H1 (cell line): ENCODE measurements at regions of chr11 and their contacts with region 1.

Region 1: DNA sequence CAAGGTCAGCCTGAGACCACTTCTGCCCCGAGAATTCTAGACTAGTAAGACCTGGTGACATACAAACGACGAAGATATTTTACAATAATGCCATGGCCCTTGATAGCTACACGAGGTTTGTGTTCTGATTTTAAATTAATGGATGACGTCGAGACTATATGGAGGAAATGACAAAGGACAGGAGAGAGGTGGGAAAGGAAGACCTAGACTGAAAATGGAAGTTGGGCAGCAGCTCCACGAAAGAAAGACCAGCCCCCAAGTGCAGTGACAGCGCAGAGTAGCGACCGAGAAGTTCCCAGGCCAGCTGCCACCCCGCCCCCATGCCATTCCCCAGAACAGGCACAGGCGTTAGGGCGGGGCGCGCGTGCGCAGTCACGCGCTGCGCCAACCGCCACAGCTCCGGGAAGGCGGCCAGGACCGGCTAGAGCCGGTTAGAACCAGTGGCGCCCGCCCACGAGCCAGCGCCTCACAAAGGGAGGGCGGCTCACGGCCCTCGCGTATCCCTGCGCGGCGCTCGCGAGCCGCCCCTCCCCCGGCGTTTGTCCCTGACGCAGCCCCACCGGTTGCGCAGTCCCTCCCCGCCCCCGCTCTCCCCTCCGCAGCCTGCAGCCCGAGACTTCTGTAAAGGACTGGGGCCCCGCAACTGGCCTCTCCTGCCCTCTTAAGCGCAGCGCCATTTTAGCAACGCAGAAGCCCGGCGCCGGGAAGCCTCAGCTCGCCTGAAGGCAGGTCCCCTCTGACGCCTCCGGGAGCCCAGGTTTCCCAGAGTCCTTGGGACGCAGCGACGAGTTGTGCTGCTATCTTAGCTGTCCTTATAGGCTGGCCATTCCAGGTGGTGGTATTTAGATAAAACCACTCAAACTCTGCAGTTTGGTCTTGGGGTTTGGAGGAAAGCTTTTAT is 1.5 kb upstream of the MALAT1 start:
- DNase-seq: peak; percentile 97
- H3K4me3 ChIP-seq: peak overlapping the region; percentile 82 to 100 (median 95)
- H3K27ac ChIP-seq: peak overlapping the region; percentile 99
- H3K4me1 ChIP-seq: peaks cover 7 to 21% (median 12%) of the 10 kb centered on the region in 4 experiments; a peak in 6 of 7 replicates
- H3K27me3 ChIP-seq: no peaks in the 10 kb centered on the region
- CTCF ChIP-seq: no peak
- EP300 ChIP-seq: peak; percentile 47 to 98; a peak in 2 of 3 replicates
- POLR2A ChIP-seq: peak; percentile 75 to 91
- RAD21 ChIP-seq: peak; percentile 5 to 31; a peak in 3 of 4 replicates

Region 2: DNA sequence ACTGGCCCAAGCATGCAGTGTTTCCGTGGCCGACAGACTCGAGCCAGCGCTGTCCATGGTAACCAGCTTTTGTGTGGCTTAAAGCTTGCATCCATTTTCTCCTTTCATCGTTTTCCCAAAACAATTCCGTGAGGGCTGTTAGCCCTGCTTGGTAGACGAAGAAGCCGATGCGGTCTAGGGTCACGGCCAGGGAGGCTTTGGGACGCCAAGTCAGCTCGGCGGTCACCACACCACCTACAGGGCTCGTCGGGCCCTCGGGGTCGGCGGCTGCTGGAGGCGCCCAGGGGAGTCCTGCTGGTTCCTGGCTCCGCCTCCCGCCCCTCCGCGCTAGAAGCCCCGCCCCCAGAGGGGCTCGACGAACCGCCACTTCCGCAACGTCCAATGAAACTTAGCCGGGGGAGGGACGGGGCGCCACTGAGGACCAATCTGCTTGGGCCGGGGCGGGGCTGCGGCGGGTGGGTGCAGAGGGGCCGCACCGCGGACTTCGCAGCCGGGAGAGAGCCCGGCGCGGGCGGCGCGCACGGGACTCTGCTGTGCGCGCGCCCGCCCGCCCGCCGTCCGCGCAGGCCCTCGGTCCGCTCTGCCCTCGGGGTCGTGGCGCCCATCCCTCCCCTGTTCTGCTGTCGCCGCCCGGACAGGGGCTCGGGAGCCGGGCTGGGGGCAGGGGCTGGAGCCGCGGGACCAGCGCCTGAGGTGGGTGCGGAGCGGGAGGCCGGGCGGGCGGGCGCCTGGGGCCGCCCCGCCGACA is 143.0 kb before region 1 on chr11 and contains the start of gene TIGD3:
- CTCF ChIA-PET with region 1: no interaction called
- POLR2A ChIA-PET with region 1: interaction called, 21 read pairs
- DNase-seq: peak; percentile 85 to 98
- H3K4me3 ChIP-seq: peak within 1 kb of the TSS; percentile 65 to 90 (median 78)
- H3K27ac ChIP-seq: no peak within 1 kb of the TSS
- H3K4me1 ChIP-seq: peaks cover 0 to 10% (median 3%) of the 10 kb centered on the region in 4 experiments; a peak in 5 of 7 replicates
- H3K27me3 ChIP-seq: peaks cover 7 to 29% (median 19%) of the 10 kb centered on the region in 4 experiments
- CTCF ChIP-seq: no peak
- EP300 ChIP-seq: no peak
- POLR2A ChIP-seq: peak in 1 of 2 experiments; percentile 11; a peak in 1 of 3 replicates
- RAD21 ChIP-seq: no peak
- total RNA-seq, gene TIGD3: 0.88 and 1.3 TPM in 2 replicates

Region 3: DNA sequence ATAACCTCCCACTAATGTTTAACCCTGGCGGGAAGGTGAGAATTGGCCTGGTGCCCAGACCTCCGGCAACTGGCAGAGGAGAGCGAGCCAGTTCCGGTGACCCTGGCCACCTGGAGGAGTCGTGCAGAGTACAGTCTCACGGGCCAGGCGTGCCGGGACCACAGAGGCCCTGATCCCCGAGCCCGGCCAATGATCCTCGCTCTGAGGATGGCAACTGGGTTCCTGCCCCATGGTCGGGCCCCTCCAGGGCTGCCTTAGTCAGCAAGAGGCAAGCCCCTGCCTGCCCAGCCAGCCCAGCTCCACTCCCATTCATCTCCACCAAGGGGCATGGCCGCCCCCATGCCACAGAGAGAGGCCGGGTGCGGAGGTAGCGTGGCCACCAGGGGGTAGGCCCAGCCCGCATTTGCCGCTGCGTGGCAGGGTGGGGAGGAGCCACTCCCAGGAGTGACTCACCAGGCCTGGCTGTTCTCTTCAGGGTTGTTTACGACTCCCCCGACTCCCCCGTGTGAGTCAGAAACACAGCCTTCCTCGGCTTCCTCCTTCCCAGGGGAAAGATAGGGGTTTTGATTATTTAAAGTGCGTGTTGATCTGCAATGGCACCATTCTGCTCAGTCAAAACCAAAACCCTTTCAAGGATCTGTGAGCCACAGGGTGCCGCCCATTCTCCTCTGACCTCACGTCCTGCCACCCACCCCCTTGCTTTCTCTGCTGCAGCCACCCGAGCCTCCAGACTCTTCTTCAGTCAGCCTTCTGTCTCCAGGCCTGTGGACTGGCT is 115.2 kb before region 1 on chr11 and contains the start of gene SLC25A45:
- CTCF ChIA-PET with region 1: interaction called, 3 read pairs
- POLR2A ChIA-PET with region 1: interaction called, 202 read pairs
- DNase-seq: peak in 1 of 2 experiments; percentile 80
- H3K4me3 ChIP-seq: peak within 1 kb of the TSS in 1 of 4 experiments; percentile 8; a peak in 2 of 8 replicates
- H3K27ac ChIP-seq: no peak within 1 kb of the TSS; the same call in 1 of the 2 replicates
- H3K4me1 ChIP-seq: peaks cover 0 to 12% (median 11%) of the 10 kb centered on the region in 4 experiments; a peak in 5 of 7 replicates
- H3K27me3 ChIP-seq: 0 out of 7 replicates have a peak, but pooled peaks cover 0 to 2% (median 0%) of the 10 kb centered on the region in 4 experiments
- CTCF ChIP-seq: peak; percentile 23 to 50 (median 46)
- EP300 ChIP-seq: no peak
- POLR2A ChIP-seq: 0 out of 3 replicates have a peak, but pooled peaks of 1 of the 2 experiments have one; percentile 19
- RAD21 ChIP-seq: peak; percentile 49 to 55
- total RNA-seq, gene SLC25A45: 0.54 and 0.61 TPM in 2 replicates

Region 4: DNA sequence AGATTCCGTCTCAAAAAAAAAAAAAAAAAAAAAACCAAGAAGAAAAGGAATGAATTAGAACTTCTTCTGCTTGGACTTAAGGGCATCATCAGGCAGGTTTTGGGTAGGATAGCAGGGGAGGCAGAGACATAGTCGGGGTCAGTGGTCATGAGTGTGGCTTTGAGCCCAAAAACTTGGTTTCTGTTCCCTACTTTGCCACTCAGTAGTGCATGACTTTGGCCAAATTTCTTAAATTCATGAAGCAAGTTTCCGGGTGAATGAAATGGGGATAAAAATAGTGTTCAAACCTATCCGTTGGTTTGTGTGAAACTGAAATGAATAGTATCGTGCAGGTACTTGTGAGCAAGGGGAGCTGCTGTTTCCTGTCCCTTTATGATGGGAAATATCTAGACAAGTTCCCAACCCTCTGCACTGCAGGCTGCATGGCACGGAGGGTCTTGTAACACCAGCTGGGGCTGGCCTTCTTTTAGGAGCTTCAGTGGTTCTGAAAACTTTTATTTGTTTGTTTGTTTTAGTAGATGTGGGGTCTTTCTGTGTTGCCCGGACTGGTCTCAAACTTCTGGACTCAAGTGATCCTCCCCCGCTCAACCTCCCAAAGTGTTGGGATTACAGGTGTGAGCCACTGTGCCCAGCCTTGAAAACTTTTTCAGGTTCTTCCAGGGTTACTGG is 56.4 kb before region 1 on chr11:
- CTCF ChIA-PET with region 1: interaction called, 4 read pairs
- POLR2A ChIA-PET with region 1: interaction called, 30 read pairs
- DNase-seq: no peak
- H3K4me3 ChIP-seq: no peak overlapping the region
- H3K27ac ChIP-seq: no peak overlapping the region
- H3K4me1 ChIP-seq: no peaks in the 10 kb centered on the region; a peak in 2 of 7 replicates
- H3K27me3 ChIP-seq: no peaks in the 10 kb centered on the region
- CTCF ChIP-seq: no peak
- EP300 ChIP-seq: no peak
- POLR2A ChIP-seq: no peak
- RAD21 ChIP-seq: no peak

Region 5: DNA sequence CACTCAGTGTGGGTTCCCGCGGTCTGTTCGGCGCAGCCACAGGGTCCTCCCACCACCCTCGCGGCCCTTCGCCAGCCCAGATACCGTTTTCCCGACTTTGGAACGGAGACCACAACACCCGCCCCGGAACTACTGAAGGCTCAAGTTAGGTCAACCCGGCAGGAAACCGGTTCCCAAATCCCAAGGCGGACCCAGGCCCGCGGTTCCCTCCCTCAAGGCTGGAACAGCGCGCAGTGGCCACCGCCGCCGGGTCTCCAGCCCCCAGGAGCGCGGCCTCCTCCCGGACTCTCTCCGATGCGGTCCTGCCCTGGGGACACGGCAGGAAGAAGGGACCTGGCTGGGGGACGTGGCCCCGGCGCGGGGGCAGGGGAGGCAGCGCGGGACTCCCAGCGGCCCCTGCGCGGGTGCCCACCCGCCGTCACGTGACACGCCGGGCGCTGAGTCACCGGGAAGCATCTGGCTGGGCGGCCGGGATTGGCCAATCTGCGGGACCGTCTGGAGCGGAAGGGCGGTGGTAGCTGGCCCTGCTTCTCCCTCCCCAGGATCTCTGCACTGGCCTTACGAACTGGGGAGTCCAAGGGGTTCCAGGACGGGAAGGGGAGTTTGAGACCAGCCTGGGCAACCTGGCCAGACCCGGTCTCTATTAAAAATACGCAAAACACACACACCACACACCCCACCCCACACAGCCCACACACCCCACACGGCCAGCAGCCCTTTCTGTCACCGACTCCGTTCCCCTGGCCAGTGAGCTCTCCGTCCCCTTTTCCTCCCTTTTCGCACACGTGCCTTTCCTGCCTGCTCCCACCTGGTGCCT is 20.0 kb before region 1 on chr11:
- CTCF ChIA-PET with region 1: interaction called, 809 read pairs
- POLR2A ChIA-PET with region 1: interaction called, 1,447 read pairs
- DNase-seq: peak in 1 of 2 experiments; percentile 91
- H3K4me3 ChIP-seq: peak overlapping the region; percentile 60 to 86 (median 74)
- H3K27ac ChIP-seq: peak overlapping the region; percentile 90
- H3K4me1 ChIP-seq: peaks cover 0 to 20% (median 16%) of the 10 kb centered on the region in 4 experiments; a peak in 5 of 7 replicates
- H3K27me3 ChIP-seq: no peaks in the 10 kb centered on the region
- CTCF ChIP-seq: no peak
- EP300 ChIP-seq: no peak
- POLR2A ChIP-seq: peak; percentile 70 to 88
- RAD21 ChIP-seq: no peak

Region 6: DNA sequence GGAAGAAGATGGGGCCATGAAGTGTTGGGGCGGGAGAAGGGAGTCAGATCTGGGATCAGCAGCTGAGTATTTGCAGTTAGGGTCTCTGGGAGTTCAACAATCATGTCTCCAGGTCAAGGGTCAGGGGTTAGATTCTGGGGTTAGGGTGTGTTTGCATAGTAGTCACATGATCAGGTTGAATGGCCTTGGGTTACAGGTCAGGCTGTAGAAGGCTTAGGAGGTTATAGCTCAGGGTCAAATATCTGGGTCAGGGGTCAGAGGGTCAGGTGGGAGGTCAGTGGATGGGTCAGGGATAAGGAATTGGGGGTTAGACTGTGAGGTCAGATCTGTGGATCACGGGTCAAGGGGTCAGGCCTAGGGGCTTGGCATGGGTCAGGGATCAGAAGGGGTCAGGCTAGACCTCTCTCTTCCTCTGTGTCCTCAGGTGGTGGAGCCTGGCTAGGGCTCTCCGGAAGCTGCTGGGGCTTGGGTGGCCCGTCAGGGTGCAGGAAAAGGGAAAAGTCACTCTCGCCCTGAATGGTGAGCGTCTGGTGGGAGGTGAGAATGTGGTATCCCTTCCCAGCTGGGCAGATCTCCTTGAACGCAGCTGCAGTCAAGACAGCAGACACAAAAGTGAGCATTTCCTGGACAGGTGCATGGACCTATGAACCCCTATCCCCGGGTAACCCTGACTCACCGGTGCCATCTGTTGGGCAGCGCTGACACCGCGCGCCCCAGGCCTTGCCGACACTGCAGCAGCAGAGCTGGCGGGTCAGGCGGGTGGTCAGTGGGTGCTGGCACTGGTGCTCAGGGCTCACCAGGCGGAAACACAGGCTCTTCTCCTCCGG is 54.4 kb after region 1 on chr11:
- CTCF ChIA-PET with region 1: interaction called, 5 read pairs
- POLR2A ChIA-PET with region 1: interaction called, 22 read pairs
- DNase-seq: peak in 1 of 2 experiments; percentile 92
- H3K4me3 ChIP-seq: no peak overlapping the region
- H3K27ac ChIP-seq: no peak overlapping the region
- H3K4me1 ChIP-seq: peaks cover 0 to 36% (median 27%) of the 10 kb centered on the region in 4 experiments; a peak in 6 of 7 replicates
- H3K27me3 ChIP-seq: peaks cover 2 to 39% (median 26%) of the 10 kb centered on the region in 4 experiments; a peak in 6 of 7 replicates
- CTCF ChIP-seq: peak in 2 of 3 experiments; percentile 74 to 84; a peak in 3 of 4 replicates
- EP300 ChIP-seq: no peak
- POLR2A ChIP-seq: no peak
- RAD21 ChIP-seq: peak; percentile 36 to 58

Region 7: GRCh38 chr11:65630215-65630614 is 132.8 kb after region 1 on chr11:
- CTCF ChIA-PET with region 1: no interaction called
- POLR2A ChIA-PET with region 1: no interaction called
- DNase-seq: no peak
- H3K4me3 ChIP-seq: no peak overlapping the region
- H3K27ac ChIP-seq: no peak overlapping the region
- H3K4me1 ChIP-seq: no peaks in the 10 kb centered on the region
- H3K27me3 ChIP-seq: no peaks in the 10 kb centered on the region
- CTCF ChIP-seq: no peak
- EP300 ChIP-seq: no peak
- POLR2A ChIP-seq: no peak
- RAD21 ChIP-seq: no peak

Region 8: GRCh38 chr11:65927904-65928397 is 430.6 kb after region 1 on chr11:
- CTCF ChIA-PET with region 1: no interaction called
- POLR2A ChIA-PET with region 1: no interaction called
- DNase-seq: no peak
- H3K4me3 ChIP-seq: no peak overlapping the region
- H3K27ac ChIP-seq: peak overlapping the region; percentile 41; the same call in 1 of the 2 replicates
- H3K4me1 ChIP-seq: peaks cover 0 to 8% (median 5%) of the 10 kb centered on the region in 4 experiments; a peak in 5 of 7 replicates
- H3K27me3 ChIP-seq: no peaks in the 10 kb centered on the region
- CTCF ChIP-seq: no peak
- EP300 ChIP-seq: no peak
- POLR2A ChIP-seq: no peak
- RAD21 ChIP-seq: no peak